ENCODE measurements at regions of chr4 and their contacts with region 1.

Region 1: DNA sequence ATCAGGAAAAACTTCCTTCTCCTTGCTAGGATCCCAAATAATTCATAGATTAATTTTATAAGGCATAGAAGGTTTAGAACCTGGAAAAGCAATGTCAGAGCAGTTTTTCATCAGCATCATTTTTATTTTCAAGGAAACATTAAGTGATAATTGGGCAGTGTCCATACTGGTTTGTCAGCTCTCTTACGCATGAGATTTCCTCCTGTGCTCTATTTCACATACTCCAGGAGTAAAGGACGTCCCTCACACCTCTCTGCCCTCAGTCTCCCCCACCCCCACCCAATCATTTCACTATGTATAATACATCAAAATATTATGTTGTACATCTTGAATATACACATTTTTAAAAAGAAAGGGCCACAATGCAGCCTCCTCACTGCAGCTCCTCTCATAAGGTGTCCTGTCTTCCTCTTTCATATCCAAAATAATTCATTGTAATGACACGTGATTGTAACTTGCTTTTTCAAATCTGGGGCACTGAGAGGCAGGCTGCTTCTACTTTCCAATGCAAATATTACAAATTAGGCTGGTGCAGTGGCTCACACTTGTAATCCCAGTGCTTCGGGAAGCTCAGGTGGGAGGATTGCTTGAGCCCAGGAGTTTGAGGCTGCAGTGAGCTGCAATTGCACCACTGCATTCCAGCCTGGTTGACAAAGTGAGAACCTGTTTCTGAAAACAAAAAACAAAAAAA is 34.4 kb downstream of the ARHGEF38 start:
- DNase-seq: no peak
- H3K4me3 ChIP-seq: no peak overlapping the region
- H3K27ac ChIP-seq: no peak overlapping the region
- H3K4me1 ChIP-seq: no peaks in the 10 kb centered on the region
- H3K27me3 ChIP-seq: no peaks in the 10 kb centered on the region
- CTCF ChIP-seq: no peak

Region 2: GRCh38 chr4:105548483-105548882 is 38.3 kb before region 1 on chr4:
- CTCF ChIA-PET with region 1: no interaction called
- dilution Hi-C with region 1: no loop called
- in situ Hi-C with region 1: no loop called
- intact Hi-C with region 1: no loop called
- DNase-seq: peak; percentile 84
- H3K4me3 ChIP-seq: no peak overlapping the region
- H3K27ac ChIP-seq: peak overlapping the region; percentile 50
- H3K4me1 ChIP-seq: peaks cover 31% of the 10 kb centered on the region
- H3K27me3 ChIP-seq: no peaks in the 10 kb centered on the region
- CTCF ChIP-seq: no peak

Region 3: GRCh38 chr4:105605493-105605892 is 18.7 kb after region 1 on chr4:
- CTCF ChIA-PET with region 1: no interaction called
- dilution Hi-C with region 1: no loop called
- in situ Hi-C with region 1: no loop called
- intact Hi-C with region 1: loop called (anchors 1 kb)
- DNase-seq: peak; percentile 51
- H3K4me3 ChIP-seq: no peak overlapping the region
- H3K27ac ChIP-seq: no peak overlapping the region
- H3K4me1 ChIP-seq: peaks cover 4% of the 10 kb centered on the region
- H3K27me3 ChIP-seq: no peaks in the 10 kb centered on the region
- CTCF ChIP-seq: no peak

Region 4: DNA sequence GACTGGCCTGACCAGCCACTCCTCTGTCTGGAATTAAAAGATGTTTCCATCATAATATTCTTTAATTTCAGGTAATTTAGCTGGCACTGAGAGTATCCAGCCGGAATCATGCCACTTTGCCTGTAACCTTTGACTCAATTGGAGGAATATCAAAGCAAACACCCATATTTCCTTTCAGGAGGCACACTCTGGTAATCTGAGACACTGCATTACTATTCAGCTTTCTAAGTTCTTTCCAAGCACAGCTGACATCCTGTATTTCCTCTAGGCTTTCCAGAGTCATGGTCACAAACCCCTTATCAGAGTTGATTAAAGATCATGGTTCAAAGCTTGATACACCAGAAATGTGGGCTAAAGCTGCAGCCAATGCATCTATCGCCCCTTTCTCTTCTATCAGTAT is 92.4 kb after region 1 on chr4:
- CTCF ChIA-PET with region 1: no interaction called
- dilution Hi-C with region 1: no loop called
- in situ Hi-C with region 1: no loop called
- intact Hi-C with region 1: no loop called
- DNase-seq: no peak
- H3K4me3 ChIP-seq: no peak overlapping the region
- H3K27ac ChIP-seq: no peak overlapping the region
- H3K4me1 ChIP-seq: no peaks in the 10 kb centered on the region
- H3K27me3 ChIP-seq: no peaks in the 10 kb centered on the region
- CTCF ChIP-seq: no peak